HEK293 (cell line): ENCODE measurements at regions of chr12 and their contacts with region 1.

Region 1: GRCh38 chr12:120301962-120302815 is at the start of gene SIRT4:
- H3K4me3 ChIP-seq: peak within 1 kb of the TSS; percentile 51
- H3K27ac ChIP-seq: peak within 1 kb of the TSS; percentile 40; the same call in 1 of the 2 replicates
- H3K4me1 ChIP-seq: no peaks in the 10 kb centered on the region
- CTCF ChIP-seq: peak; percentile 82

Region 2: DNA sequence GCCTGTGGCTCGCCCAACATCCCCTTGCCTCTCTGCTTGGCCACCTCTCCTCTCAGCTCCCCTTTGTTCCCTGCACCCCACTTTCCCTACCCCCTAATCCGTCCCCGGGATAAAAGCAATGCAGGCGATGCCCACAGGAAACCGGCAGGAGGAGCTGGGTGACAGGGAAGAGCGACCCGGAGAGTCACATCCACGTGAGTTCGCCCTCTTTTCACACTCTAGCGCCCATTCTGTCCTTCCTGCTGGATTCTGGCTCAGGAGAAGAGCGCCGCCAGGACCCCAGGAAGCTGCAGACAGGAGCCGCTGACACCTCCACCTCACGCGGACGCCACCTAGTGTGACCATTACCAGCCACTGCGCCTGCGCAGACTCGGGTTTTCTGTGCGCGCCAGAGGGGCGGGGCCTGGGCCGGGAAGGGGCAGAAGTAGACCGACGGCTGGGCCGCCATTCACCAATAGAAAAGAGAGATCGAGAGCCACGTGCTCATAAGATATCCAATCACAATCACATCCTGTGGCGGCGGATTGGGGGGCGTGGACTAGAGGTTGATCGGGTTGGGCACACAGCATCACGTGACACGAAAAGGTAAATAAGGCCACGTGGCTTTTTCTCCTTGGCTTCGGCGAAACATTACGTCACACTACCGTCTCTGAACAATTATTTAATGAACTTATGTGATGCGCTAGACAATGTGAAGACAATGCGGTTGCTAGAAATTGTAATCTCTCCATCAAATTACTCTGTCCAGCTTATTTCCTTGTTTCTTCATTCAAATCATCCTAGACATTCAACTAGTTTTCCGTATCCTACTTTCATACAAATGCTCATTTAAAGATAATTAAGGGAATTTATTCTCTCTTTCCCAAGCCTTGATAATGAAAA is 15.3 kb after region 1 on chr12:
- CTCF ChIA-PET with region 1: interaction called, 23 read pairs
- POLR2A ChIA-PET with region 1: interaction called, 6 read pairs
- H3K4me3 ChIP-seq: peak overlapping the region; percentile 44
- H3K27ac ChIP-seq: peak overlapping the region; percentile 6; the same call in 1 of the 2 replicates
- H3K4me1 ChIP-seq: 0 out of 2 replicates have a peak, but pooled peaks cover 4% of the 10 kb centered on the region
- CTCF ChIP-seq: peak; percentile 99